WTC11 (cell line): ENCODE measurements at regions of chr17 and their contacts with region 1.

Region 1: GRCh38 chr17:78865682-78866390 is 25.2 kb upstream of the USP36 start:
- DNase-seq: peak; percentile 88
- ATAC-seq: peak; percentile 96
- H3K4me3 Mint-ChIP-seq: no peak overlapping the region
- H3K27ac Mint-ChIP-seq: no peak overlapping the region
- H3K4me1 Mint-ChIP-seq: no peaks in the 10 kb centered on the region
- H3K27me3 Mint-ChIP-seq: no peaks in the 10 kb centered on the region
- CTCF ChIP-seq: peak; percentile 89

Region 2: DNA sequence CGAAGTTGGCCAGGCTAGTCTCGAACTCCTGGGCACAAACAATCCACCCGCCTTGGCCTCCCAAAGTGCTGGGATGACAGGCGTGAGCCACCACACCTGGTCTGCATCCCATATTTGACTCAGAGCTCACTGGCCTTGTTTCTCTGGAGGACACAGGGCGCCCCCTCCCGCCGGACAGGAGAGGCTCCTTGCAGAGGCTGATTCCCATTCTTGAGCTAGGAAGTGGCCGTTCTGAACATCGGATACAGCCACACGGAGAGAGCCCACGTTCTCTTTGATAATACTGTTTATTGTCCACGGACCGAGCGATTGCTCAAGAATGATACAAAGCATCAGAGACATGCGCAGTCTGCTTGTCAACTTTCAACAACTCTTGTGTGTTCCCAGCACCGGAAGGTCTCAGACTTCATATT is 13.1 kb before region 1 on chr17:
- CTCF ChIA-PET with region 1: interaction called, 24 read pairs
- POLR2A ChIA-PET with region 1: no interaction called
- DNase-seq: peak; percentile 52
- ATAC-seq: peak; percentile 69
- H3K4me3 Mint-ChIP-seq: no peak overlapping the region
- H3K27ac Mint-ChIP-seq: peak overlapping the region; percentile 3; the same call in 1 of the 2 replicates
- H3K4me1 Mint-ChIP-seq: peaks cover 2% of the 10 kb centered on the region; the same call in 1 of the 2 replicates
- H3K27me3 Mint-ChIP-seq: no peaks in the 10 kb centered on the region
- CTCF ChIP-seq: no peak

Region 3: DNA sequence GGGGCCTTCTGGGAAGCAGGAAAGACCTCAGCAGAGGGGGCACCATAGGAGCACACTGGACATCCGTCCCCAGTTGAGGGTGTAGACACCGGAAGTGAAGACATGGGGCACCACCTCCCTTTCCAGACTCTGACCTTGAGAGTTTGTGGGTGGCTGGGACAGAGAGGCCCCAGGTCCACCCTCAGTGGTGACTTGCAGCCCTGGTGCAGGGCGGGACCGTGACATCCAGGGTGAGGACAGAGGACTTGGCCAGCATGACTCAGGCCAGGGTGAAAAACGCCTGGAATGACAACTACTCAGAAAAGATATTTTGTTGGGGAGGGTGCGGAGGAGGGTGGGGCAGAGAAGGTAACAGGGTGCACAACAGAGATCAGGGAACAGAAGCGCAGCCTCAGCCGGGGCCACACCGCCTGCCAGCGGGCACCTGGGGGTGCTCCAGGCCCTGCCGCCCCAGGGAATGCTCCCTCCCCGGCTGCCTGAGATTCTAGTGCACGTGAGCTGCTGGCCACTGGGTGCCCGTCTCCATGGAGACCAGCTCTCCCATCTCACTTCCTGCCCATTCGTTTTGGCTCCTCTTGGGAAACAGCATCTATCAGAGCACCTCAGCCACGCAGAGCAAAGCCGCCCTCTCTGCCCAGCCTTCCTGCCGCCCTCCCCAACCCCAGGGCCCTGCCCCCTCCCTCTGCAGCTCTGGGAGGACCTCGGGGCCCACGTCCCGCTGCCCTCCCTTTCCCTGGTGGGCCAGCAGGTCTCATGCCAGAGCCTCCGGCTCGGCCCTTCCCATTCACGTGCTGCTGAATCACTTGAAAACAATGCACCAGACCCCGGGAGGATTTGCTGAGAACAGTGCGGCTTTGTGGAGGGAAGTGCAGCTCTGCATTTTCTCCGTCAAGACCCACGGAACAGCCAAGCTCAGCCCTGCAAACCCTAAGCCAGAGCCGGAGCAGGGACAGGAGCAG is 17.6 kb after region 1 on chr17:
- CTCF ChIA-PET with region 1: interaction called, 20 read pairs
- POLR2A ChIA-PET with region 1: no interaction called
- DNase-seq: no peak
- ATAC-seq: peak; percentile 64
- H3K4me3 Mint-ChIP-seq: peak overlapping the region; percentile 31; the same call in 1 of the 2 replicates
- H3K27ac Mint-ChIP-seq: peak overlapping the region; percentile 88
- H3K4me1 Mint-ChIP-seq: peaks cover 33% of the 10 kb centered on the region
- H3K27me3 Mint-ChIP-seq: no peaks in the 10 kb centered on the region
- CTCF ChIP-seq: no peak

Region 4: GRCh38 chr17:78915872-78916632 is 50.2 kb after region 1 on chr17:
- CTCF ChIA-PET with region 1: interaction called, 14 read pairs
- POLR2A ChIA-PET with region 1: no interaction called
- DNase-seq: no peak
- ATAC-seq: no peak
- H3K4me3 Mint-ChIP-seq: no peak overlapping the region
- H3K27ac Mint-ChIP-seq: peak overlapping the region; percentile 91
- H3K4me1 Mint-ChIP-seq: peaks cover 24% of the 10 kb centered on the region
- H3K27me3 Mint-ChIP-seq: no peaks in the 10 kb centered on the region
- CTCF ChIP-seq: no peak

Region 5: DNA sequence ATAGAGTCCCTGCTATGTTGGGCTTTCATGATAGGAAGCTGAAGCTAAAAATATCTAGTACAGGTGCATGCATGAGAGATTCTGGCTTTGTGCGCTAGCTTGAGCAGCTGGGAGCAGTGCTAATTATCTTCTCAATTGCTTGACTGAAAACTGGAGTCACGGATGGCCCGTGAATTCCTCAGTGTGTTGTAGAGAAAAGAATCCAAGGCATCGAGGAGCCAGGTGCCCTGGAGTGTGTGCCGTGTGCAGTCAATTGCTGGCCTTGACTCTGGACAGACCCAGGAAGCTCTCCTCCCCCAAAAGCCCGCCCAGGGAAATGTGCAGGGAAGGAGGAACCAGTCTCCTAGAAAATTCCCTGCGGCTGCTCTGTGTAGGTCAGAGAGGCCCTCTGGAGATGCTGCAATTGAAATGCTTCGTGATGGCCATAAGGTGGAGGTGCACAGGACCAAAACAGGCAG is 99.7 kb after region 1 on chr17:
- CTCF ChIA-PET with region 1: interaction called, 95 read pairs
- POLR2A ChIA-PET with region 1: no interaction called
- DNase-seq: no peak
- ATAC-seq: no peak
- H3K4me3 Mint-ChIP-seq: no peak overlapping the region
- H3K27ac Mint-ChIP-seq: no peak overlapping the region
- H3K4me1 Mint-ChIP-seq: no peaks in the 10 kb centered on the region
- H3K27me3 Mint-ChIP-seq: no peaks in the 10 kb centered on the region; the same call in 1 of the 2 replicates
- CTCF ChIP-seq: no peak